ENCODE measurements at regions of chr6 and their contacts with region 1.

Region 1: DNA sequence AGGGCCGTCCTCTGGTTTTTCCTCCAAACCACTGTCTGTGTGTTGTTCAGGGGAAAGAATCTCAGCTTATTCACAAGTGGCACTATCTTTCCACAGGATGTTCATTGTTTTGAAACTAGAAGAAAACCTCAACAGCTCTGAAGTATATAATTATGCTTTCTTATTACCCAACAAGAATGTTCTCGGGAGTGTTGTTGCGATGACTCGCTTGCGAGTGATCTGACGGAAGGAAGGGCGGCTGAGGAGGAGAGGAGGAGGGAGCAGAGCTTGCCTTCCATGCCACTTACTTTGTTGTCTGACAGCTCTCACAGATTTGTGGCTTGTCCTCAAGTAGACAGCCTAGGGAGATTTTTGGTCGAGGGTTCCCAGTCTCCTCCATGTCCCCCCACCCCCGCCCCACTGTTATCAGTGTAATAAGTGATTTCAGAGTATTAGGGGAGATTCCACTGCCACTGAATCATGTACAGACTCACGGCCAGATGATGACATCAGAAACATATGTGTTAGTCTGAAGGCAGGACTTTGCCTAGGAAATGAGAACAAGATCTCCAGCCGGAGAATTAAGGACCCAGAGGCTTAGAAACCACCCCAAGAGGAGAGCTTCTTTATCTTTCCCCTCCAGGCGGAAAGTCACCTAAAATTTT is 80.7 kb upstream of the CCN6 start:
- DNase-seq: peak; percentile 81
- H3K4me3 Mint-ChIP-seq: peak overlapping the region; percentile 59
- H3K27ac Mint-ChIP-seq: peak overlapping the region; percentile 89
- H3K4me1 Mint-ChIP-seq: peaks cover 63% of the 10 kb centered on the region
- H3K27me3 Mint-ChIP-seq: no peaks in the 10 kb centered on the region

Region 2: GRCh38 chr6:111861431-111861885 is 111.8 kb before region 1 on chr6:
- CTCF ChIA-PET with region 1: interaction called, 3 read pairs
- POLR2A ChIA-PET with region 1: no interaction called
- intact Hi-C with region 1: loop called (anchors 1 kb)
- DNase-seq: peak; percentile 48
- H3K4me3 Mint-ChIP-seq: peak overlapping the region; percentile 2
- H3K27ac Mint-ChIP-seq: peak overlapping the region; percentile 52
- H3K4me1 Mint-ChIP-seq: peaks cover 100% of the 10 kb centered on the region
- H3K27me3 Mint-ChIP-seq: no peaks in the 10 kb centered on the region

Region 3: GRCh38 chr6:111985202-111985731 is 12.0 kb after region 1 on chr6:
- CTCF ChIA-PET with region 1: interaction called, 10 read pairs
- POLR2A ChIA-PET with region 1: interaction called, 11 read pairs
- intact Hi-C with region 1: loop called (anchors 1 kb)
- DNase-seq: peak; percentile 63
- H3K4me3 Mint-ChIP-seq: no peak overlapping the region
- H3K27ac Mint-ChIP-seq: peak overlapping the region; percentile 92
- H3K4me1 Mint-ChIP-seq: peaks cover 74% of the 10 kb centered on the region
- H3K27me3 Mint-ChIP-seq: no peaks in the 10 kb centered on the region

Region 4: GRCh38 chr6:111997078-111997852 is 24.0 kb after region 1 on chr6:
- CTCF ChIA-PET with region 1: interaction called, 16 read pairs
- POLR2A ChIA-PET with region 1: no interaction called
- intact Hi-C with region 1: loop called (anchors 1 kb)
- DNase-seq: peak; percentile 87
- H3K4me3 Mint-ChIP-seq: peak overlapping the region; percentile 48
- H3K27ac Mint-ChIP-seq: peak overlapping the region; percentile 28
- H3K4me1 Mint-ChIP-seq: peaks cover 48% of the 10 kb centered on the region
- H3K27me3 Mint-ChIP-seq: no peaks in the 10 kb centered on the region

Region 5: GRCh38 chr6:112100561-112100960 is 127.3 kb after region 1 on chr6:
- CTCF ChIA-PET with region 1: no interaction called
- POLR2A ChIA-PET with region 1: no interaction called
- intact Hi-C with region 1: no loop called
- DNase-seq: no peak
- H3K4me3 Mint-ChIP-seq: no peak overlapping the region
- H3K27ac Mint-ChIP-seq: no peak overlapping the region
- H3K4me1 Mint-ChIP-seq: no peaks in the 10 kb centered on the region
- H3K27me3 Mint-ChIP-seq: no peaks in the 10 kb centered on the region